ENCODE measurements at regions of chrX and their contacts with region 1.

Region 1: DNA sequence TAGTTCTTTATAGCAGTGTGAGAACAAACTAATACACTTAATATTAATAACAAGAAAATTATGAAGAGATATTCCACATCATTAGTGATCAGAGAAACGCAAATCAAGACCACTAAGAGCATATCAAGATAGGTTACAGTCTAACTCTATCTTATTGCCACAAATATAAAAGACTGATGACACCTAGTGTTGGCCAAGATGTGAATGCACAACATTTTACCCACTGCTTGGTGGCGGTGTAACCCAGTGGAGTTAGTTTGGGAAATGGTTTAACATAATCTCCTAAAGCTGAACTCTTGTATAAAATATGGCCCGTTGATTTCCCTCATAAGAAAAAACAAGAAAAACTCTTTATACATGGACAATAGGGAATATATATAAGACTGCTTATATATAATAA is 92.4 kb downstream of the SLITRK2 start:
- DNase-seq: peak; percentile 14
- H3K4me3 Mint-ChIP-seq: no peak overlapping the region
- H3K27ac Mint-ChIP-seq: no peak overlapping the region
- H3K4me1 Mint-ChIP-seq: no peaks in the 10 kb centered on the region
- H3K27me3 Mint-ChIP-seq: no peaks in the 10 kb centered on the region
- CTCF ChIP-seq: no peak

Region 2: GRCh38 chrX:145213504-145213903 is 696.5 kb before region 1 on chrX:
- CTCF ChIA-PET with region 1: no interaction called
- POLR2A ChIA-PET with region 1: no interaction called
- intact Hi-C with region 1: loop called (anchors 10 kb)
- DNase-seq: peak; percentile 65
- H3K4me3 Mint-ChIP-seq: no peak overlapping the region
- H3K27ac Mint-ChIP-seq: no peak overlapping the region
- H3K4me1 Mint-ChIP-seq: no peaks in the 10 kb centered on the region
- H3K27me3 Mint-ChIP-seq: no peaks in the 10 kb centered on the region
- CTCF ChIP-seq: peak; percentile 49